ENCODE measurements at regions of chr15 and their contacts with region 1.

Region 1: DNA sequence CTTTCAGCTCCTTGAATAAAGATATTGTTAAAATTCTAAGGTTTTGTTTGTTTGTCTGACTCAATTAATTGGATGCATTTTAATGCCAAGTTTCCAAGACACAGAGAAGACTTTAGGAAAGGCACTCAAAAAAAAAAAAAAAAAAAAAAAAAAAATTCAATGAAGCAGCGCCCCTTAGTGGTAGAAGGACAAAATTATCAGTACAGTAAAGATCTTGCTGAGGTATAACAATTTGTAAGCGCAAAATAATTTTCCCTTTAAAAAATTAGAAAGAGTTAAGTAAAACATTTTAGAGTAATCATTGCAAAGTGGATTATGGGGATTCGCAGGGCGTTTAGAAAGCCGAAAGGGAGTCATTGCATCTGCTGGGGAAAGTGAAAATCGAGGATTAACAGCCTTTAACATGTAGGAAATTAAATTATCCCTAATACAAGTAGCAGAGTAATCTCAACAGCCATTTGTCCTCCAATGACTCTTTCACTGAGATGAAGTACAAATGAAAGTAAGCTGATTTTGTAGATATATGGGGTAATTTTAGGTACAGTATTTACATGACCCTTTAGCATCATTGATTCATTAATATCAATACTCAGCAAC is 5.8 kb upstream of the DIS3L start:
- DNase-seq: peak; percentile 14
- ATAC-seq: no peak
- H3K4me3 ChIP-seq: no peak overlapping the region
- H3K27ac ChIP-seq: no peak overlapping the region
- H3K4me1 ChIP-seq: peaks cover 5% of the 10 kb centered on the region; the same call in 1 of the 2 replicates
- H3K27me3 ChIP-seq: peaks cover 5% of the 10 kb centered on the region
- CTCF ChIP-seq: peak; percentile 60
- POLR2A ChIP-seq: no peak
- RAD21 ChIP-seq: peak; percentile 43

Region 2: GRCh38 chr15:65916664-65917406 is 370.7 kb before region 1 on chr15:
- CTCF ChIA-PET with region 1: no interaction called
- POLR2A ChIA-PET with region 1: no interaction called
- dilution Hi-C with region 1: no loop called
- in situ Hi-C with region 1: no loop called
- intact Hi-C with region 1: loop called (anchors 2 kb)
- DNase-seq: peak; percentile 74
- ATAC-seq: peak; percentile 99
- H3K4me3 ChIP-seq: no peak overlapping the region
- H3K27ac ChIP-seq: no peak overlapping the region
- H3K4me1 ChIP-seq: peaks cover 5% of the 10 kb centered on the region; the same call in 1 of the 2 replicates
- H3K27me3 ChIP-seq: no peaks in the 10 kb centered on the region
- CTCF ChIP-seq: peak; percentile 78
- POLR2A ChIP-seq: no peak
- RAD21 ChIP-seq: peak; percentile 84

Region 3: DNA sequence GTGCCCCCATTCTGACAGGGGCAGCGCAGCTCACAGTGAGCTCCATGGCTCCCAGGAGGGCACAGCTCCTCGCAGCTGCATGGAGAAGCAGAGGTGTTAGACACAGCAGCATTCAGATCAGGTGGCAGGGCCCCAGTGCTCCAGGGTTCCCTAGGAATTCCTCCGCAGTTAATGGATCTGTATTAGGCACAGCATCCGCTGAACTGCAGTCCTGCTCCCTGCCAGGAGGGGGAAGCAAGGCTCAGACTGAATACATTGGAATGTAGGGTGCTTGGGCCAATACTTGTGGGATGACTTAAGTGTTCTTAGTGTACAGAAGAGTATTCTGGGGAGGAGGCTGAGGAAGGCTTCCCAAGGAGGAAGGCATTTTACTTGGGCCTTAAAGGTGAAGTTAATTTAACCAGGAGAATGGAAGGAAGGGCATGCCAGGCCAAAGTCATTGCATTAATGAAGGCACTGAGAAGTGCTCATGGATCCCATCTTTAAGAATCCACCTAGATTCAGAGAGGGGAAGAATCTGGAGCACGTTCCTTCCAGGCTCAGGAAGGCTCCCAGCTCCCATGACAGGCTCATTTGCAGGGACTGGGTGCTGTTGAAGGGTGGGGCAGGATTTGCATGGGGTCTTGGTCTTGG is 306.6 kb before region 1 on chr15:
- CTCF ChIA-PET with region 1: no interaction called
- POLR2A ChIA-PET with region 1: no interaction called
- dilution Hi-C with region 1: no loop called
- in situ Hi-C with region 1: loop called (anchors 5 kb)
- intact Hi-C with region 1: loop called (anchors 1 kb)
- DNase-seq: peak; percentile 79
- ATAC-seq: peak; percentile 100
- H3K4me3 ChIP-seq: no peak overlapping the region
- H3K27ac ChIP-seq: no peak overlapping the region
- H3K4me1 ChIP-seq: no peaks in the 10 kb centered on the region
- H3K27me3 ChIP-seq: peaks cover 51% of the 10 kb centered on the region
- CTCF ChIP-seq: peak; percentile 67
- POLR2A ChIP-seq: no peak
- RAD21 ChIP-seq: peak; percentile 66

Region 4: GRCh38 chr15:66153549-66154415 is 133.8 kb before region 1 on chr15:
- CTCF ChIA-PET with region 1: no interaction called
- POLR2A ChIA-PET with region 1: no interaction called
- dilution Hi-C with region 1: no loop called
- in situ Hi-C with region 1: no loop called
- intact Hi-C with region 1: no loop called
- DNase-seq: no peak
- ATAC-seq: no peak
- H3K4me3 ChIP-seq: no peak overlapping the region
- H3K27ac ChIP-seq: no peak overlapping the region
- H3K4me1 ChIP-seq: no peaks in the 10 kb centered on the region
- H3K27me3 ChIP-seq: peaks cover 60% of the 10 kb centered on the region
- CTCF ChIP-seq: no peak
- POLR2A ChIP-seq: no peak
- RAD21 ChIP-seq: no peak

Region 5: GRCh38 chr15:66253418-66254088 is 34.0 kb before region 1 on chr15 and contains the start of gene MEGF11:
- CTCF ChIA-PET with region 1: no interaction called
- POLR2A ChIA-PET with region 1: no interaction called
- dilution Hi-C with region 1: no loop called
- in situ Hi-C with region 1: no loop called
- intact Hi-C with region 1: no loop called
- DNase-seq: peak; percentile 28
- ATAC-seq: peak; percentile 63
- H3K4me3 ChIP-seq: peak within 1 kb of the TSS; percentile 43
- H3K27ac ChIP-seq: no peak within 1 kb of the TSS
- H3K4me1 ChIP-seq: peaks cover 6% of the 10 kb centered on the region; the same call in 1 of the 2 replicates
- H3K27me3 ChIP-seq: peaks cover 91% of the 10 kb centered on the region
- CTCF ChIP-seq: no peak
- POLR2A ChIP-seq: no peak
- RAD21 ChIP-seq: no peak
- total RNA-seq, gene MEGF11: not detected in 2 replicates

Region 6: GRCh38 chr15:66489179-66489791 is 201.7 kb after region 1 on chr15:
- CTCF ChIA-PET with region 1: no interaction called
- POLR2A ChIA-PET with region 1: no interaction called
- dilution Hi-C with region 1: no loop called
- in situ Hi-C with region 1: no loop called
- intact Hi-C with region 1: no loop called
- DNase-seq: no peak
- ATAC-seq: peak; percentile 59
- H3K4me3 ChIP-seq: no peak overlapping the region
- H3K27ac ChIP-seq: no peak overlapping the region
- H3K4me1 ChIP-seq: no peaks in the 10 kb centered on the region; the same call in 1 of the 2 replicates
- H3K27me3 ChIP-seq: no peaks in the 10 kb centered on the region
- CTCF ChIP-seq: no peak
- POLR2A ChIP-seq: no peak
- RAD21 ChIP-seq: no peak